ENCODE measurements at regions of chr7 and their contacts with region 1.

Region 1: DNA sequence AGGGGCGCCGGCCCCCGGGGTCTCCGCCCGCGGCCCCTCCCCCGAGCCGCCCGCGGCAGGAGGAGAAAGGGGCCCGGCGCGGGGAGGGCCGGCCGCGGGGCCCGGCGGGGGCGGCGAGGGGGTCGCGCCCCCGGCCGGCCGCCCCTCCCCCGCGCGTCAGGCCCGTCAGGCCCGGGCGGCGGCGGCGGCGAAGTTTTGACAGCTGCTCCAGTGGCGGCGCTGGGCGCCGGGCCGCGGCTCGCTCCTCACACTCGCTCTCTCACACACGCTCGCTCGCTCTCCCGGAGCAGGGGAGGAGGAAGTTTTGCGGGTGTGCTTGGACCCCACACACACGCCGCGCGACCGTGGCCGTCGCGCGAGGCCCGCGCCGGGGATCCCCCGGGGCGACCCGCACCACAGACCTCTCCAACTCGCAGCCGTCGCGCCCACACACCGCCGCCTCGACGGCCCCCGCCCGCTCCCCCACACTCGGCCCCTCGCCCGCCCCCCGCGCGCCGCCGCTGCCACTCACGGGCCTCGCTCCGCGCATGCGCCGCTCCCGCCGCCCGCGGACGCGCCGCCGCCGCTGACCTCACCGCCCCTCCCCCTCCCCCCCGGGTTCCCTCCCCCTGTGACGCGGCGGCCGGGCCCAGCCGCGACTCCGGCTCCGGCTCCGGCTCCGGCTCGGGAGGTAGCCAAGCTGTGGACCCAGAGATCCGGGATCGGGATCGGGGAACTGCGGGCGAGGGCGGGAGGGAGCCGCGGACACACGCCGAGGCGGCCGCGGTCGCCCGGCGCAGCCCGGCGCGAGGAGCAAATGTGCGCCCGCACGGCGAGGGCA is 518 bp upstream of the KMT2C start:
- DNase-seq: peak; percentile 95
- H3K4me3 ChIP-seq: peak overlapping the region; percentile 62
- H3K27ac ChIP-seq: peak overlapping the region; percentile 92
- H3K4me1 ChIP-seq: peaks cover 5% of the 10 kb centered on the region
- H3K27me3 ChIP-seq: no peaks in the 10 kb centered on the region
- CTCF ChIP-seq: no peak

Region 2: GRCh38 chr7:152025077-152025936 is 411.0 kb before region 1 on chr7 and contains the start of gene GALNT11:
- CTCF ChIA-PET with region 1: no interaction called
- POLR2A ChIA-PET with region 1: no interaction called
- intact Hi-C with region 1: no loop called
- DNase-seq: peak; percentile 92
- H3K4me3 ChIP-seq: peak within 1 kb of the TSS; percentile 71
- H3K27ac ChIP-seq: peak within 1 kb of the TSS; percentile 84
- H3K4me1 ChIP-seq: no peaks in the 10 kb centered on the region
- H3K27me3 ChIP-seq: no peaks in the 10 kb centered on the region
- CTCF ChIP-seq: peak; percentile 32; the same call in 1 of the 2 replicates
- total RNA-seq, gene GALNT11: 30.4 and 35.5 TPM in 2 replicates

Region 3: DNA sequence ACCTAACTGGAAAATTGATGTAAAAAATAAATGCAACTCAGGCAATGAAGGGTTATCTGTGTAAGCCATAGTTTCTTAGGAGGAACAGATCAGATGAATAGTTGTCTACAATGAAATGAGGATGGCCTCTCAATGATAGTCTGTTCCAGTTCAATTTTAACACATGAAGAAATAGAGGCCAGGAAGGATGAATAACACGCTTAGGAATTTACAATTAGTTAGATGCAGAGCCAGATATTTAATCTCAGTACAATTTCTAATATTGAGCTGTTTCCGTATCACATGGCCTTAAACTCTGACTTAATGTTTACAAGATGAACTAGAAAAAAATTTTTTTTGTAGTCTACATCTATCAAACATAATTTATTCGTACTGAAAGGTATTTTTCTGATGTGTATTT is 234.3 kb before region 1 on chr7:
- CTCF ChIA-PET with region 1: no interaction called
- POLR2A ChIA-PET with region 1: no interaction called
- intact Hi-C with region 1: no loop called
- DNase-seq: peak; percentile 19
- H3K4me3 ChIP-seq: no peak overlapping the region
- H3K27ac ChIP-seq: no peak overlapping the region
- H3K4me1 ChIP-seq: no peaks in the 10 kb centered on the region
- H3K27me3 ChIP-seq: no peaks in the 10 kb centered on the region
- CTCF ChIP-seq: no peak

Region 4: DNA sequence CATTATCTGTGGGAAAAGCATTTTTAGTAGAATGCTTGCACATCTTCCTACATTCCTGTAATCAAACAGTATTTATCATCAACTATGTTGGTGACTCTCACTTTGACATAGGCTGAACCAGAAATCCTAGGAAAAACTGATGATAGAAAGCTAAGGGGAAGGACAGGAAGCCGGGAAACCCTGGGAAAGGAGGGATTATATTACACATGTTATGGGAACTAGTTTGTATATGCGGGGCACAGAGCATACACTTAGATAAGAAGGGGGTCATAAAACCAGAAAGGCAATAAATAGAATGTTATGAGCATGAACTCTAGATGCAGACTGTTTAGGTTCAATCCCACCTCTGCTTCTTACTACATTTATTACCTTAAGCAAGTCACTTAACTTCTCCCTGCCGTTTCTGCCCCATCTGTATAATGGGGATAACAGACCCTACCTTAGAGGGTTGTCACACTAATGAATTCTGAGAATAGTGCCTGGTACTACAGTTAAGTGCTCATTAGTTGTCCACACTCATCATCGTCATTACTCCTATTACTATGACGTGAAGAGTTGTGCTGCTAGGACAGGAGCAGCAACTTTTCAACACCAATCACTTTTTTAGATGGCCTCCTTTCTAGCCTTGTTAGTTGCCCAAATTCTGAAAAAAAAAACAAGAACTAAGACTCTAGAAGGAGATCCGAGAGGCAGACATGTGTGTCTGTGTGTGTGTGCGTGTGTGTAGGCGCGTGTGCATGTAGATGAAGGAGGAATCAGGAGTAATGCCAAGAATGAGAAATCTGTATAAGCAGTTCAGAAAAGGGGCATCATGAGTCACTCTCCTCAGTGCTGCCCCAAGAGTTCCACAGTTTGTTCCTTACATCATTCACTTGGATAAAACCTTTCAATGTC is 52.7 kb before region 1 on chr7:
- CTCF ChIA-PET with region 1: no interaction called
- POLR2A ChIA-PET with region 1: interaction called, 15 read pairs
- intact Hi-C with region 1: no loop called
- DNase-seq: peak; percentile 55
- H3K4me3 ChIP-seq: no peak overlapping the region
- H3K27ac ChIP-seq: no peak overlapping the region
- H3K4me1 ChIP-seq: peaks cover 4% of the 10 kb centered on the region
- H3K27me3 ChIP-seq: no peaks in the 10 kb centered on the region
- CTCF ChIP-seq: no peak

Region 5: GRCh38 chr7:152463709-152464311 is 27.5 kb after region 1 on chr7:
- CTCF ChIA-PET with region 1: no interaction called
- POLR2A ChIA-PET with region 1: no interaction called
- intact Hi-C with region 1: loop called (anchors 1 kb)
- DNase-seq: peak; percentile 99
- H3K4me3 ChIP-seq: peak overlapping the region; percentile 100
- H3K27ac ChIP-seq: peak overlapping the region; percentile 96
- H3K4me1 ChIP-seq: no peaks in the 10 kb centered on the region
- H3K27me3 ChIP-seq: no peaks in the 10 kb centered on the region
- CTCF ChIP-seq: no peak

Region 6: DNA sequence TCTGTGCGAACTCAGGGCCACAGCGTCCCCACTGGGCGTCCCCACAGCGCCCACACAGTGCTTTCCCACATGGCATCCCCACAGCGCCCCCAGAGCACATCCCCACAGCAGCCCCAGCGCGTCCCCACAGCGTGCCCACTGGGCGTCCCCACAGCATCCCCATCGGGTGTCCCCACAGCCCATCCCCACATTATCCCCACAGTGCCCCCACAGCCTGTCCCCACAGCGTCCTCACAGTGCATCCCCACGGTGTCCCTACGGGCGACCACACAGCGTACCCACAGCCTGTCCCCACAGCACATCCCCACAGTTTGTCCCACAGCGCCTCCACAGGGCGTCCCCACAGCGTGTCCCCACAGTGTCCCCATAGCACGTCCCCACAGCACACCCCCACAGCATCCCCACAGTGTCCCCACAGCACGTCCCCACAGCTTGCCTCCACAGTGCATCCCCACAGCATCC is 454.9 kb after region 1 on chr7:
- CTCF ChIA-PET with region 1: no interaction called
- POLR2A ChIA-PET with region 1: no interaction called
- intact Hi-C with region 1: no loop called
- DNase-seq: no peak
- H3K4me3 ChIP-seq: no peak overlapping the region
- H3K27ac ChIP-seq: no peak overlapping the region
- H3K4me1 ChIP-seq: no peaks in the 10 kb centered on the region
- H3K27me3 ChIP-seq: no peaks in the 10 kb centered on the region
- CTCF ChIP-seq: no peak

Region 7: DNA sequence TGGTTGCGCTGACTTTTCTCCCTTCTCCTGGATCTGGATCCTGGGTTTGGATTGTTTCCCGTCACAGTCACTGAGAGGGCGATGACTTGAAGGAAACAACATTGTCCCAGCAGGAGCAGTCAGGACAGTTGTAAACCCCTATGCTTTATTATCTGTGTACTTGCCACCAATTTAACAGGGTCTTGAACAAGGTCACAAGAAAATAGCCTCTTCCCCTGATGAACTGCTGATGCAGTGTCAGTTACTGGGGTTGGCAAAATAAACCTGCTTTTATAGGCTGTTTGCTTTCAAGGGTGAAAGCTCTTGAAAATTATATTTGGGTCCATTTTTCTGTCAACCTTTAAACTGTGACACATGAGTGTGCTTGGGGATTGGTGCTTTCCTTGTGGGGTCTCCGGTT is 562.1 kb after region 1 on chr7:
- CTCF ChIA-PET with region 1: no interaction called
- POLR2A ChIA-PET with region 1: no interaction called
- intact Hi-C with region 1: no loop called
- DNase-seq: no peak
- H3K4me3 ChIP-seq: no peak overlapping the region
- H3K27ac ChIP-seq: no peak overlapping the region
- H3K4me1 ChIP-seq: no peaks in the 10 kb centered on the region
- H3K27me3 ChIP-seq: peaks cover 15% of the 10 kb centered on the region
- CTCF ChIP-seq: no peak